Naive thymus-derived CD8-positive, alpha-beta T cell (primary cell): ENCODE measurements at regions of chr3 and their contacts with region 1.

Region 1: GRCh38 chr3:43345877-43346276 is 59.5 kb downstream of the SNRK start:
- DNase-seq: no peak
- ATAC-seq: peak in 1 of 2 donors; percentile 14
- H3K4me3 Mint-ChIP-seq: peak overlapping the region; percentile 41 to 81 (median 71)
- H3K27ac Mint-ChIP-seq: peak overlapping the region; percentile 93 to 99 (median 98)
- H3K4me1 Mint-ChIP-seq: peaks cover 24 to 94% (median 84%) of the 10 kb centered on the region in 4 donors
- H3K27me3 Mint-ChIP-seq: no peaks in the 10 kb centered on the region

Region 2: GRCh38 chr3:43215663-43216275 is 130.1 kb before region 1 on chr3:
- POLR2A ChIA-PET with region 1: interaction called, 16 read pairs
- DNase-seq: peak in 1 of 10 donors; percentile 29
- ATAC-seq: peak; percentile 62 to 71
- H3K4me3 Mint-ChIP-seq: peak overlapping the region in 9 of 10 donors; percentile 11 to 83 (median 63)
- H3K27ac Mint-ChIP-seq: peak overlapping the region; percentile 88 to 95 (median 90)
- H3K4me1 Mint-ChIP-seq: peaks cover 37 to 62% (median 58%) of the 10 kb centered on the region in 4 donors
- H3K27me3 Mint-ChIP-seq: no peaks in the 10 kb centered on the region

Region 3: GRCh38 chr3:43286115-43286840 is 59.6 kb before region 1 on chr3 and contains the start of gene SNRK:
- POLR2A ChIA-PET with region 1: interaction called, 43 read pairs
- DNase-seq: peak; percentile 81 to 98 (median 94)
- ATAC-seq: peak; percentile 69 to 81
- H3K4me3 Mint-ChIP-seq: peak within 1 kb of the TSS; percentile 94 to 100 (median 99)
- H3K27ac Mint-ChIP-seq: peak within 1 kb of the TSS; percentile 96 to 100 (median 100)
- H3K4me1 Mint-ChIP-seq: peaks cover 30 to 42% (median 35%) of the 10 kb centered on the region in 4 donors
- H3K27me3 Mint-ChIP-seq: peaks cover 0 to 2% (median 0%) of the 10 kb centered on the region in 5 donors
- polyA plus RNA-seq, gene SNRK: 71.1 to 97.5 (median 90.6) TPM

Region 4: DNA sequence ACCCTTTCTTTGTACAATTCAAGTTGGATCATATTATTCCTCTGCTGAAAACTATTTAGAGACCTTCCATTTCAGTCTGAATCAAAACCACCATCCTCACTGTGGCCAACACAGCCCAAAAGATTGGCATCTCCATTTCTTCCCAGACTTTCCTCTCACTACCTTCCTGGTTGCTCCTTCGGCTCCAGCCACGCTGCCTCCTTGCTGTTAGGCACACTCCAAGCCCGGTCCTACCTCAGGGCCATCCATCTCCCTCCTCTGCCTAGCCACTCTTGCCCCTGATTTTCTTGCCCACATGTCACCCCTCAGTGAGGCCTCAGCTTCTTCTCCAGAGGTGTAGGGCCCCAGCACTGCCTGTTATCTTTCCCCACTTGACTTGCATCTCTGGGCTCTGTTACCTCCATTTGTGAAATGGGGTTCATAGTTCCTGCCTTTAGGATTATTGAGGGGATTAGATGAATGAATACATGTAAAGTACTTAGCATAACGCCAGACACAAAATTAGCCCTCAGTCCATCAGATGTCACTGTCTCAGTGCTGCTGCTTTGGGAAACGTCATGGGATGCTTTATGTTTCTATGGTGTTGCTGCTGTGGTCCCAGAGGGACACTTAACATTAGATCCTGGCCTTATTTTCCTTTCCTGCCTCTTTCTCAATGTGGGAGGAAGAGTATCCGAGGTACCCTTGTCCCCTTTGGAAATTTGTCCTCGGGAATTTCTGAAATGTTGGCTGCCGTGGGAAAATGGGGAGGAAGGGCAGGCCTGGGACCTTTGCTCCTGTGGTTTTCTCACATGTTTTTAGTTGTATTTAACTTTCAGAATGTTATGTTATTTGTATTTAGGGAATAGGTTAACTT is 28.2 kb before region 1 on chr3:
- POLR2A ChIA-PET with region 1: interaction called, 15 read pairs
- DNase-seq: no peak
- ATAC-seq: peak; percentile 47 to 57
- H3K4me3 Mint-ChIP-seq: peak overlapping the region; percentile 41 to 89 (median 71)
- H3K27ac Mint-ChIP-seq: peak overlapping the region; percentile 79 to 95 (median 90)
- H3K4me1 Mint-ChIP-seq: peaks cover 32 to 90% (median 83%) of the 10 kb centered on the region in 4 donors
- H3K27me3 Mint-ChIP-seq: no peaks in the 10 kb centered on the region

Region 5: GRCh38 chr3:43378066-43378935 is 32.4 kb after region 1 on chr3:
- POLR2A ChIA-PET with region 1: interaction called, 18 read pairs
- DNase-seq: peak; percentile 48 to 86 (median 72)
- ATAC-seq: peak; percentile 97 to 98
- H3K4me3 Mint-ChIP-seq: peak overlapping the region in 3 of 10 donors; percentile 24 to 29 (median 26)
- H3K27ac Mint-ChIP-seq: peak overlapping the region; percentile 70 to 91 (median 82)
- H3K4me1 Mint-ChIP-seq: peaks cover 18 to 37% (median 25%) of the 10 kb centered on the region in 4 donors
- H3K27me3 Mint-ChIP-seq: no peaks in the 10 kb centered on the region